ENCODE measurements at regions of chr1 and their contacts with region 1.

Region 1: DNA sequence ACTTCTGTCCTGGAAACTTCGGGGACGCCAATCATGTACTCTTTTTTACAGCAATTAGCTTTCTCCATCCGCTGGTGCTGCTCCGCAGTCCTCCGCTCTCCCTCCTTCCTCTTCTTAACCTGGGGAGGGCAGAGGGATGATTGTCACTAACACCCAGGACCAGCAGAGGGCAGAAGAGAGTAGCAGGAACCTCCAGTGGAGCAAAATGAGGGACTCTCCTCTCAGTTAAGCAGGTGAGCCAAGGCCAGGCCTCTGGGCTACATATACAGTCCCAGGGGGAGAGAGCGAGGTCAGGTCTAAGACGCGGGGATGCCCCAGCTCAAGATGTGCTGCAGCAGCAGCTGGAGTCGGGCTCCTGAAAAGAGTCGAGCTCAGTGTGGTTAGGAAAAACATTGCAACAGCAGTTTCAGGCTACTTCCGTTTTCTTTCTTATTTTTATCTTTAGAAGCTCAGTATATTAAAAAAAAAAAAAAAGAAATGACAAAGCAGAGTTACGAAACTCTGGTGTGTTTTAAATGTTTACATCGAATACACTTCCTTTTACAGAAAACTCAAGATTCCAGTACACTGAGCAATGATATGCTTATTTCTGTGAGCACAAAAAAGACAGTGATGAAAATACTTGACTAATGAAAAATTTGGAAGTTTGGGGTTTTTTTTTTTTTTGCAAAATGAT is 25.7 kb upstream of the NLRP3 start:
- DNase-seq: peak; percentile 85
- H3K27ac ChIP-seq: no peak overlapping the region
- CTCF ChIP-seq: peak; percentile 82

Region 2: GRCh38 chr1:247373721-247374141 is 16.5 kb before region 1 on chr1:
- CTCF ChIA-PET with region 1: interaction called, 14 read pairs
- POLR2A ChIA-PET with region 1: no interaction called
- DNase-seq: peak; percentile 23
- H3K27ac ChIP-seq: no peak overlapping the region
- CTCF ChIP-seq: no peak

Region 3: DNA sequence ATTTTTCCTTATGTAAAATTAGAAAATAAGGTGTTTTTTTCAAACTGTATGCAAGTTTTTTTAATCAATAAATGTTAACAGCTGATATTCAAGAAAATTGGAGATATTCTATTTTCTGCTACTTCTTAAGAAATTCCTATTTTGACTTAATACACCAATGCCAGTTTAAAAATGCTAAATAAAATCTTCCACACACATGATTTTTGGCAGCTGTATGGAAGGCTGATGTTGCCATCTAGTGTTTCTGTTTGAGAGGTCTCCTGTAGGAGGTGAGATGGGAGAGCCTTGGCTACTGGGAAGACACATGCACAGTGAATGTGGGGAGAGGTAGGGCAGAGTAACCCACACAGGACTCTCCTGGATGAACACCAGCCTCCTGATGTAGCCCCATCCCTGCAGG is 96.8 kb after region 1 on chr1:
- CTCF ChIA-PET with region 1: interaction called, 29 read pairs
- POLR2A ChIA-PET with region 1: no interaction called
- DNase-seq: peak; percentile 50
- H3K27ac ChIP-seq: no peak overlapping the region
- CTCF ChIP-seq: peak; percentile 36

Measured in RWPE1 (cell line).